Activated CD4-positive, alpha-beta memory T cell treated with anti-CD3 and anti-CD28 coated beads for 36 hours (primary cell): ENCODE measurements at regions of chrX and their contacts with region 1.

Region 1: DNA sequence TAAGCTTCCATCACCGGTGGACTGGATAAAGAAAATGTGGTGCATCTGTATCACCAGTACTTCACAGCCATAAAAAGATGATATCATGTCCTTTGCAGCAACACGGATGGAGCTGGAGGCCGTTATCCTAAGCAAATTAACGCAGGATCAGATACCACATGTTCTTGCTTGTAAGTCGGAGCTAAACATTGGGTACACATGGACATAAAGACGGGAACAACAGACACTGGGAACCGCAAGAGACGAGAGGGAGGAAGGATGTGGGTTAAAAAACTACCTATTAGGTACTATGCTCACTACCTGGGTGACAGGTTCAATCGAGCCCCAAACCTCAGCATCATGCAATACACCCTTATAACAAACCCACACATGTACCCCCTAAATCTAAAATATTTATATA is 16.3 kb upstream of the IDS start:
- DNase-seq: no peak
- H3K4me3 Mint-ChIP-seq: peak overlapping the region; percentile 23
- H3K27ac Mint-ChIP-seq: no peak overlapping the region
- H3K4me1 Mint-ChIP-seq: peaks cover 41% of the 10 kb centered on the region
- H3K27me3 Mint-ChIP-seq: no peaks in the 10 kb centered on the region

Region 2: DNA sequence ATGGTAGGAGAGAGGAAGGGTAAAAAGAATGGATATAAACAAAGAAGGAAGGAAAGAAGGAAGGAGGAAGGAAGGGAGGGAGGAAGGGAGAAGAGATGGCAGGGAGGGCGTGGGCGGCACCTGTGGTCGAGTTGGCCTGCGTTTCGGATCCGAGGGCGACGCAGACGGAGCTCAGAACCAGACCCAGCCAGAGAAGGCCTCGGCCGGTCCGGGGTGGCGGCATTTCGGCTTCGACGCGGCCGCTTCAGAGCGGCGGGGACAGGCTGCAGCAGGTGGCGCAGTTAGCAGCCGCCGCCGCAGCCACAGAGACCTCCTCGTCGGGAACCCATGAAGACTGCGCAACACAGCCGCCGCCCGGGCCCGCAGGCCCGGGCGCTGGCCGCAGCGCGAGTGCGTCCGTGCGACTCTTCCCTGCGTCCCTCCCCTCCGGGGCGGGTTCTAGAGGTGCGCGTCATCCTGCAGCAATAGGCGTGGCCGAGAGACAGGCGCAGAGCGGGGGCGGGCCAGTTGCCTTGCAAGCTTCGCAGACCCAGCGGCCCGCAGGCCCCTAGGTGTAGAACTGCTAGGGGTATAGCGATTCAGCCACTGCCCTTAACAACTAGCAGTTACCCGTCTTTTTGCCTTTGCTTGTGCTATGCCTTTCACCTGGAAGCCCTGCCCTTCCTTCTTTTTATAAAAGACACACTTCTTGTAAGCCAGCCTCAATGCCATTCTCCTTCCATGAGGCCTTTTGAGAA is 16.4 kb before region 1 on chrX and contains the start of gene IDS:
- CTCF ChIA-PET with region 1: interaction called, 3 read pairs
- POLR2A ChIA-PET with region 1: interaction called, 7 read pairs
- intact Hi-C with region 1: loop called (anchors 2 kb)
- DNase-seq: peak; percentile 93
- H3K4me3 Mint-ChIP-seq: peak within 1 kb of the TSS; percentile 97
- H3K27ac Mint-ChIP-seq: peak within 1 kb of the TSS; percentile 99
- H3K4me1 Mint-ChIP-seq: peaks cover 25% of the 10 kb centered on the region
- H3K27me3 Mint-ChIP-seq: no peaks in the 10 kb centered on the region
- total RNA-seq, gene IDS: 71.6 to 72.2 TPM